Activated naive CD4-positive, alpha-beta T cell treated with anti-CD3 and anti-CD28 coated beads, Interleukin-2, amount 10 ng/mL, durations not matched to agents 7 days and 5 days (primary cell): ENCODE measurements at regions of chr1 and their contacts with region 1.

Region 1: GRCh38 chr1:157156058-157156541 is 17.9 kb upstream of the ETV3 start:
- DNase-seq: peak; percentile 81
- H3K4me3 Mint-ChIP-seq: no peak overlapping the region
- H3K27ac Mint-ChIP-seq: no peak overlapping the region
- H3K4me1 Mint-ChIP-seq: peaks cover 32% of the 10 kb centered on the region
- H3K27me3 Mint-ChIP-seq: peaks cover 52% of the 10 kb centered on the region

Region 2: GRCh38 chr1:156948708-156949107 is 207.4 kb before region 1 on chr1:
- CTCF ChIA-PET with region 1: no interaction called
- DNase-seq: no peak
- H3K4me3 Mint-ChIP-seq: no peak overlapping the region
- H3K27ac Mint-ChIP-seq: no peak overlapping the region
- H3K4me1 Mint-ChIP-seq: no peaks in the 10 kb centered on the region
- H3K27me3 Mint-ChIP-seq: no peaks in the 10 kb centered on the region

Region 3: DNA sequence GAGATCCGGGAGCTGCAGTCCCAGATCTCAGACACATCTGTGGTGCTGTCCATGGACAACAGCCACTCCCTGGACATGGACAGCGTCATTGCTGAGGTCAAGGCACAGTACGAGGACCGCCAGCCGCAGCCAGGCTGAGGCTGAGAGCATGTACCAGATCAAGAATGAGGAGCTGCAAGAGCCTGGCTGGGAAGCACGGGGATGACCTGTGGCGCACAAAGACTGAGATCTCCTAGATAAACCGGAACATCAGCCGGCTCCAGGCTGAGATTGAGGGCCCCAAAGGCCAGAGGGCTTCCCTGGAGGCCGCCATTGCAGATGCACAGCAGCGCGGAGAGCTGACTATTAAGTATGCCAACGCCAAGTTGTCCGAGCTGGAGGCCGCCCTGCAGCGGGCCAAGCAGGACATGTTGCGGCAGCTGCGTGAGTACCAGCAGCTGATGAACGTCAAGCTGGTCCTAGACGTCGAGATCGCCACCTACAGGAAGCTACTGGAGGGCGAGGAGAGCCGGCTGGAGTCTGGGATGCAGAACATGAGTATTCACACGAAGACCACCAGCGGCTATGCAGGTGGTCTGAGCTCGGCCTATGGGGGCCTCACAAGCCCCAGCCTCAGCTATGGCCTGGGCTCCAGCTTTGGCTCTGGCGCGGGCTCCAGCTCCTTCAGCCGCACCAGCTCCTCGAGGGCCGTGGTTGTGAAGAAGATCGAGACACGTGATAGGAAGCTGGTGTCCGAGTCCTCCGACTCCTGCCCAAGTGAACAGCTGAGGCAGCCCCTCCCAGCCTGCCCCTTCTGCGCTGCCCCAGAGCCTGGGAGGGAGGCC is 81.9 kb before region 1 on chr1:
- CTCF ChIA-PET with region 1: interaction called, 20 read pairs
- DNase-seq: peak; percentile 60
- H3K4me3 Mint-ChIP-seq: no peak overlapping the region
- H3K27ac Mint-ChIP-seq: no peak overlapping the region
- H3K4me1 Mint-ChIP-seq: no peaks in the 10 kb centered on the region
- H3K27me3 Mint-ChIP-seq: peaks cover 32% of the 10 kb centered on the region

Region 4: GRCh38 chr1:157138220-157139051 is 17.7 kb before region 1 on chr1 and contains the start of gene ETV3:
- CTCF ChIA-PET with region 1: interaction called, 31 read pairs
- DNase-seq: peak; percentile 94
- H3K4me3 Mint-ChIP-seq: peak within 1 kb of the TSS; percentile 97
- H3K27ac Mint-ChIP-seq: peak within 1 kb of the TSS; percentile 93
- H3K4me1 Mint-ChIP-seq: peaks cover 56% of the 10 kb centered on the region
- H3K27me3 Mint-ChIP-seq: peaks cover 10% of the 10 kb centered on the region

Region 5: GRCh38 chr1:157170677-157171515 is 14.8 kb after region 1 on chr1:
- CTCF ChIA-PET with region 1: interaction called, 10 read pairs
- DNase-seq: peak; percentile 66
- H3K4me3 Mint-ChIP-seq: no peak overlapping the region
- H3K27ac Mint-ChIP-seq: no peak overlapping the region
- H3K4me1 Mint-ChIP-seq: no peaks in the 10 kb centered on the region
- H3K27me3 Mint-ChIP-seq: peaks cover 51% of the 10 kb centered on the region

Region 6: GRCh38 chr1:157359309-157360022 is 203.4 kb after region 1 on chr1:
- CTCF ChIA-PET with region 1: no interaction called
- DNase-seq: no peak
- H3K4me3 Mint-ChIP-seq: no peak overlapping the region
- H3K27ac Mint-ChIP-seq: no peak overlapping the region
- H3K4me1 Mint-ChIP-seq: no peaks in the 10 kb centered on the region
- H3K27me3 Mint-ChIP-seq: peaks cover 14% of the 10 kb centered on the region